Right ventricle myocardium superior (tissue), 1 donor: ENCODE measurements at regions of chr10 and their contacts with region 1.

Region 1: DNA sequence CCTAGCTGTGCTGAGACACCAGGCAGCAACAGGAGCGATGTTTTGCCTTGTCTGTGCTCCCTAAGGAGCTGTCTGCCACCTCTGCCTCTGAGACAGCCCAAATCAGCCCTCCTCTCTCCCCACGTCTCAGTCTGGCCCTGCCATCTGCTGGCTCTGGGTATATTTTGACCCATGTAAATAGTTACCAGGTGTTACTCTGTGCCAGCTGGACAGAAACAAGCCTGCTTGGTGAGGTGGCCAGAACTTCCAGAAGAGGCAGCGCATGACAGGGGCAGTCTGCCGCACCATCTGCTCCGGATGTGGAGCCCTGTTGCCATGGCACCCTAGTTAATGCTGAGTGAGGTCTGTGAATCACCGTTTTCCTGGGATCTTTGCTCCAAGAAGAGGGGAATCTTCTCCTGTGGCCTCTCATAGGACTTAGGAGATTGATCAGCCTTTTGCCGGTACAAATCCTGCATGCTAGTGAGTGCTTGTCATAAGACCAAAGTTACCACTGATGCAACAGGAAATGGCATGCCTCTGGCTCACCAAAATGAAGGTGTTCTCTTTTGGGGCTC is 31.8 kb downstream of the GSTO2 start:
- DNase-seq: peak; percentile 79
- ATAC-seq: peak; percentile 79

Region 2: DNA sequence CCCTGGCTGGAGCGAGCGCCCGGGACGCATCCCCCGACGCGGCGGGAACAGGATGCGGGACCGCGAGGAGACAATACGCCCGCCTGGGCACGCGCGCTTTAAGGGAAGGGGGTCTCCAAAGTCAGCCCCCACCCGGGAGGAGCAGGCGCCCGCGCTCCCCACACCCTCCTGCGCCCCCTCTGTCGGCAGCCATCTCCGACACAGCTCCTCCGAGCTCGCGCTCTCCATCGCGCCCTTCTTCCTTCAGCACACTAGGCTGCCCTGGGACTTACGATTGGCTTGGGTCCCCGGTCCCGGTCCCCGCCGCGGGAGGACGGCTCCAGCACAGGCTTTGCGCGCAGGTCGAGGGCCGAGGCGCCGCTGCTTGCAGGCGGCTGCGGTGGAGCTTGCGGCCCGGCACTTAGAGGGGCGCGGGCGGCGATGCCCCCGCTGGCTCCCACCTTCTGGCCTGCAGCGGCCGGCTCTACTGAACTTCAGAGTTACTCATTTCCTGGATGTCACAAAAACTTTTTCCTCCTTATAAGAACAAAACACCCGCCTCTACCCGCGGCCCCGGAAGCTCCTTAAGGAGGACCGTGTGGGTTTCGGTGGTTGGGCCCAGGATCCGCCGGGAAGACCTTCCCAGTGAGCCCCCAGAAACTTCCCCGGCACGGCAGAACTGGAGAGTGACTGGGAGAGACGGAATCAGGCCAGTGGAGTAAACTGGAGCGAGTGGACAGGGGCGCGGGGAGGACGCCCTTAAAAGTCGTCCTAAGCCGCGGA is 37.3 kb after region 1 on chr10 and contains the start of gene ITPRIP:
- intact Hi-C with region 1: loop called (anchors 5 kb)
- DNase-seq: peak; percentile 88
- ATAC-seq: peak; percentile 78
- total RNA-seq, gene ITPRIP: 29.1 TPM